ENCODE measurements at regions of chr7 and their contacts with region 1.

Region 1: GRCh38 chr7:150514748-150515222 is at the start of gene GIMAP7:
- DNase-seq: peak; percentile 83
- ATAC-seq: peak; percentile 74
- H3K4me3 Mint-ChIP-seq: peak within 1 kb of the TSS; percentile 100
- H3K27ac Mint-ChIP-seq: peak within 1 kb of the TSS; percentile 99
- H3K4me1 Mint-ChIP-seq: peaks cover 49% of the 10 kb centered on the region
- H3K27me3 Mint-ChIP-seq: no peaks in the 10 kb centered on the region
- total RNA-seq, gene GIMAP7: 49.9 to 89.7 TPM

Region 2: DNA sequence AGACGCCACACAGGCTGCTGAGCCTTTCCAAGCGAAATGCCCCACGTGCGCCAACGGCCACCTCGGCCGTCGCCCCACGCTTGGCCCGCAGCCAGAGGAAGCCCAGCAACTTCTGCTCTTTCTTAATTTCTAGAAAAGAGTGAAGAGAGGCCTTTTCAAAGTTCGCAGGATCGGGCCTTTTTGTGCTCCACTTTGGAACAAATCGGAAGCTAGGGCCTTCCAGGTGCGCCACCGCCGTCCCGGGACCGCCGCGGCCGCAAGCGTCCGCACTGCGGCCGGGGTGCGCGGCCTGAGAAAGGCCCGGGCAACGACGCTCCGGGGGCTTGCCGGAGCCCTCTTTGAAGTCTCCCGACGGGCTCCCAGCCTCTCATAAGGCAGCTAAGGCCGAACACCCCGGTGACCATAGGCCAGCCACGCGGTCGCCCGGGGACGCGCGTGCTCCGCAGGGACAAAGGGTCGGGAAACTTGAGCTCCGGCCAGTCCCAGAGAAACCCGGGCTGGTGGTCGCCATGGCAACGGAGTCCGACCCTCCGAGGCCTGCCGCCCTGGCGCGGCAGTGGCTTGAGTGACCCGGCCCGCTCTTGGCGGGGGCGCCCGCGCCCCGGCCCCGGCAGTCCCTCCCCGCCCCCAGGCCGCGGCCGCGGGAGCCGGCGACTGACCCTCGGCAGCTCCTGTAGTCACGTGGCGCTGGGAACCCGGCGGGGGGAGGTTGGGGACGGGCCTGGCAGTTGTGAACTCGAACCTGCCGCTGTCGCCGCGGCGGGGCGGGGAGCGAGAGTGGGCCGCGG is 146.5 kb before region 1 on chr7 and contains the start of gene REPIN1:
- CTCF ChIA-PET with region 1: no interaction called
- DNase-seq: peak; percentile 89
- ATAC-seq: peak; percentile 78
- H3K4me3 Mint-ChIP-seq: peak within 1 kb of the TSS; percentile 95
- H3K27ac Mint-ChIP-seq: peak within 1 kb of the TSS; percentile 95
- H3K4me1 Mint-ChIP-seq: peaks cover 37% of the 10 kb centered on the region
- H3K27me3 Mint-ChIP-seq: no peaks in the 10 kb centered on the region
- total RNA-seq, gene REPIN1: 51.4 to 55.5 TPM

Region 3: DNA sequence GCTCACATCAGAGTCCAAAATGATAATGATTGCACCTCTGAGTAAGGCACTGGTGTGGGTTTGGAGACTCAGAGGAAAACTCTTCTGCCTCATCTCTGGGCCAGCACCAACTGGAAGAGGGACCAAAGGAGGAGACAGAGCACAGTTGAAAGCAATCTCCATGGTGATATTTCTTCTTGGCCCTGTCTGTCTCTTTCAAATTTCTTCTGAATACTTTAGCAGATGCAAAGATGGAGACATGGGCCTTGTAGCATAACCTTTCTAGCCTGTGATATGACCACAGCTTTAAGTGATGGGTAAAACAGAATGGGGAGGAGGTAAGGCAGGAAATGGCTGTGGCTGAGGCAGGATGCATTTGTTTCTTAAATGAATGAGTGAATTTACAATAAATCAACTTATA is 12.3 kb before region 1 on chr7:
- CTCF ChIA-PET with region 1: interaction called, 23 read pairs
- DNase-seq: peak; percentile 80
- ATAC-seq: peak; percentile 90
- H3K4me3 Mint-ChIP-seq: peak overlapping the region; percentile 36
- H3K27ac Mint-ChIP-seq: peak overlapping the region; percentile 93
- H3K4me1 Mint-ChIP-seq: peaks cover 51% of the 10 kb centered on the region
- H3K27me3 Mint-ChIP-seq: no peaks in the 10 kb centered on the region

Region 4: DNA sequence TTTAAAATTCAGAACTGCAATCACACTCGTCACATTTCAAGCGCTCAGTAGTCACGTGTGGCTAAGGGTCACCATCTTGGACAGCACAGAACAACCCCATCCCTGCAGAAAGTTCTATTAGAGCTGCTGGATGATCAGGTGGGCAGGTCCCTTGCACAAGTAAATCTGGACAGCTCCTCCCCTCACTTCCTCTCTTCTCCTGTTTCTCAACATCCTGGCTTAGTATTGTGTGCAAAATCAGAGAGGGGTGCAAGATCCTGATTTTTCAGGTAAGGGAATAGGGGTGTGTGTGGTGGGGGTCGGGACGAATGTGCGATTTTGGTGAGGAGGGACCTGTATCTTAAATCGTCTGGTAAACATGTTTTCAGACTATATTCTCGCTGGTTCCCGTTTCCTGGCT is 52.4 kb after region 1 on chr7 and contains the start of gene GIMAP4:
- CTCF ChIA-PET with region 1: interaction called, 12 read pairs
- DNase-seq: peak; percentile 58
- ATAC-seq: peak; percentile 68
- H3K4me3 Mint-ChIP-seq: peak within 1 kb of the TSS; percentile 88
- H3K27ac Mint-ChIP-seq: peak within 1 kb of the TSS; percentile 96
- H3K4me1 Mint-ChIP-seq: peaks cover 70% of the 10 kb centered on the region
- H3K27me3 Mint-ChIP-seq: no peaks in the 10 kb centered on the region
- total RNA-seq, gene GIMAP4: 60.5 to 145 TPM

Measured in activated CD8-positive, alpha-beta memory T cell treated with anti-CD3 and anti-CD28 coated beads, Interleukin-2, amount 10 ng/mL, durations not matched to agents 7 days and 5 days (primary cell).